CD4-positive, alpha-beta T cell (primary cell): ENCODE measurements at regions of chr12 and their contacts with region 1.

Region 1: GRCh38 chr12:13135371-13136178 is 32.1 kb upstream of the GSG1 start:
- DNase-seq: no peak
- ATAC-seq: no peak
- H3K4me3 ChIP-seq: no peak overlapping the region
- H3K4me3 Mint-ChIP-seq: no peak overlapping the region
- H3K27ac ChIP-seq: no peak overlapping the region
- H3K27ac Mint-ChIP-seq: no peak overlapping the region
- H3K4me1 ChIP-seq: no peaks in the 10 kb centered on the region
- H3K4me1 Mint-ChIP-seq: no peaks in the 10 kb centered on the region
- H3K27me3 ChIP-seq: no peaks in the 10 kb centered on the region
- H3K27me3 Mint-ChIP-seq: peaks cover 7% of the 10 kb centered on the region
- CTCF ChIP-seq: no peak

Region 2: GRCh38 chr12:13181375-13182070 is 45.9 kb after region 1 on chr12:
- CTCF ChIA-PET with region 1: no interaction called
- POLR2A ChIA-PET with region 1: no interaction called
- intact Hi-C with region 1: loop called in 1 of 2 experiments (anchors 1 kb)
- DNase-seq: no peak
- ATAC-seq: no peak
- H3K4me3 ChIP-seq: no peak overlapping the region
- H3K4me3 Mint-ChIP-seq: no peak overlapping the region
- H3K27ac ChIP-seq: no peak overlapping the region
- H3K27ac Mint-ChIP-seq: no peak overlapping the region
- H3K4me1 ChIP-seq: peaks cover 22% of the 10 kb centered on the region
- H3K4me1 Mint-ChIP-seq: peaks cover 39% of the 10 kb centered on the region
- H3K27me3 ChIP-seq: no peaks in the 10 kb centered on the region
- H3K27me3 Mint-ChIP-seq: no peaks in the 10 kb centered on the region
- CTCF ChIP-seq: no peak